ENCODE measurements at regions of chr18 and their contacts with region 1.

Region 1: GRCh38 chr18:12391618-12392165 is 14.7 kb upstream of the AFG3L2 start:
- DNase-seq: peak; percentile 73
- H3K4me3 ChIP-seq: no peak overlapping the region
- H3K27ac ChIP-seq: no peak overlapping the region
- H3K4me1 ChIP-seq: no peaks in the 10 kb centered on the region
- CTCF ChIP-seq: peak; percentile 96

Region 2: GRCh38 chr18:11310476-11311086 is 1081.1 kb before region 1 on chr18:
- CTCF ChIA-PET with region 1: no interaction called
- POLR2A ChIA-PET with region 1: no interaction called
- intact Hi-C with region 1: no loop called
- DNase-seq: peak; percentile 64
- H3K4me3 ChIP-seq: no peak overlapping the region
- H3K27ac ChIP-seq: no peak overlapping the region
- H3K4me1 ChIP-seq: no peaks in the 10 kb centered on the region
- CTCF ChIP-seq: peak; percentile 93

Region 3: GRCh38 chr18:12236934-12237832 is 154.5 kb before region 1 on chr18:
- CTCF ChIA-PET with region 1: no interaction called
- POLR2A ChIA-PET with region 1: no interaction called
- intact Hi-C with region 1: no loop called
- DNase-seq: peak; percentile 51
- H3K4me3 ChIP-seq: no peak overlapping the region
- H3K27ac ChIP-seq: no peak overlapping the region
- H3K4me1 ChIP-seq: no peaks in the 10 kb centered on the region
- CTCF ChIP-seq: peak; percentile 90

Region 4: GRCh38 chr18:12420831-12421421 is 29.2 kb after region 1 on chr18:
- CTCF ChIA-PET with region 1: no interaction called
- POLR2A ChIA-PET with region 1: interaction called, 3 read pairs
- intact Hi-C with region 1: loop called (anchors 1 kb)
- DNase-seq: peak; percentile 89
- H3K4me3 ChIP-seq: peak overlapping the region; percentile 66
- H3K27ac ChIP-seq: peak overlapping the region; percentile 71
- H3K4me1 ChIP-seq: peaks cover 23% of the 10 kb centered on the region
- CTCF ChIP-seq: no peak

Region 5: GRCh38 chr18:12531749-12532148 is 140.1 kb after region 1 on chr18:
- CTCF ChIA-PET with region 1: no interaction called
- POLR2A ChIA-PET with region 1: no interaction called
- intact Hi-C with region 1: loop called (anchors 5 kb)
- DNase-seq: no peak
- H3K4me3 ChIP-seq: no peak overlapping the region
- H3K27ac ChIP-seq: no peak overlapping the region
- H3K4me1 ChIP-seq: no peaks in the 10 kb centered on the region
- CTCF ChIP-seq: 0 out of 2 replicates have a peak, but pooled peaks have one; percentile 7

Region 6: DNA sequence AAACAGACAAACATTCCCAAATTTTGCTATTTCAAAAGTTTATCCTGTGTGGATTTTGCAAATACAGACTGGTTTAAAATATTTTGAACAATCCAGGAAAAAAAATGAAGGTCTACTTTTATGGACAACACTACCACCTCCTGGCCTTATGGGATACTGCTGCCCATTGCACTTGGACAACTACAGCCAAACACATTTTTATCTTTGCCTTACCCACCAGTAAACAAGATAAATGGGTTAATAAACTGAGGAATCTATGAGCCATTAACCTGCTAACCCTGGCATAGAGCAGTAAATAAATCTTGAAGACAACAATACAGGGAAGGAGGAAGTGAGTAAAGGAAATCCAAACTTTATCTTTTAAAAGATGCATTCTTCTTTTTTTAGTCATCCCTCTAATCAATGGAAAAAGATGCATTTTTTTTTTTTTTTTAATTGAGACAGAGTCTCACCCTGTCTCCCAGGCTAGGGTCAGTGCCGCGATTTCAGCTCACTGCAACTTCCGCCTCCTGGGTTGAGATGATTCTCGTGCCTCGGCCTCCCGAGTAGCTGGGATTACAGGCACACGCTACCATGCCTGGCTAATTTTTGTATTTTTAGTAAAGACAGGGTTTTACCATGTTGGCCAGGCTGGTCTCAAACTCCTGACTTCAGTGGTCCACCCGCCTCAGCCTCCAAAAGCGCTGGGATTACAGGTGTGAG is 268.4 kb after region 1 on chr18:
- CTCF ChIA-PET with region 1: interaction called, 3 read pairs
- POLR2A ChIA-PET with region 1: interaction called, 3 read pairs
- intact Hi-C with region 1: loop called (anchors 1 kb)
- DNase-seq: peak; percentile 47
- H3K4me3 ChIP-seq: no peak overlapping the region
- H3K27ac ChIP-seq: no peak overlapping the region
- H3K4me1 ChIP-seq: peaks cover 3% of the 10 kb centered on the region
- CTCF ChIP-seq: peak; percentile 95

Region 7: GRCh38 chr18:12726774-12727550 is 335.3 kb after region 1 on chr18:
- CTCF ChIA-PET with region 1: no interaction called
- POLR2A ChIA-PET with region 1: no interaction called
- intact Hi-C with region 1: loop called (anchors 10 kb)
- DNase-seq: peak; percentile 76
- H3K4me3 ChIP-seq: no peak overlapping the region
- H3K27ac ChIP-seq: no peak overlapping the region
- H3K4me1 ChIP-seq: peaks cover 8% of the 10 kb centered on the region
- CTCF ChIP-seq: peak; percentile 96

Region 8: DNA sequence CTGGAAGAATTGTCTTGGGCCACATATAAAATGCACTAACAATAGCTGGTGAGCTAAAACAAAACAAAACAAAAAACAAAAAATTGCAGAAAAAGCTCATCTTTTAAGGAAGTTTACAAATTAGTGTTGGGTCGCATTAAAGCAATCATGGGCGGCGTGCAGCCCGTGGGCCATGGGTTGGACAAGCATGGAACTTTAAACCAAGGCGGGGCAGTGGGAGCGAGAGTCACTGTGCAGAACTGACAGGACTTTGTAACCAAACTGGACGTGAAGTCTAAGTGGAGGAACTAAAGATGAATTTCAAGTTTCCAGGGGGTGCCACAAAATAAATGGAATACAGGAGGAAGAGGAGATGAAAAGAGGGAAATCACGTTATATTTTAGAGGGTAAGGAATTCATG is 391.8 kb after region 1 on chr18:
- CTCF ChIA-PET with region 1: no interaction called
- POLR2A ChIA-PET with region 1: no interaction called
- intact Hi-C with region 1: no loop called
- DNase-seq: no peak
- H3K4me3 ChIP-seq: no peak overlapping the region
- H3K27ac ChIP-seq: no peak overlapping the region
- H3K4me1 ChIP-seq: no peaks in the 10 kb centered on the region
- CTCF ChIP-seq: no peak